WTC11 (cell line): ENCODE measurements at regions of chr19 and their contacts with region 1.

Region 1: DNA sequence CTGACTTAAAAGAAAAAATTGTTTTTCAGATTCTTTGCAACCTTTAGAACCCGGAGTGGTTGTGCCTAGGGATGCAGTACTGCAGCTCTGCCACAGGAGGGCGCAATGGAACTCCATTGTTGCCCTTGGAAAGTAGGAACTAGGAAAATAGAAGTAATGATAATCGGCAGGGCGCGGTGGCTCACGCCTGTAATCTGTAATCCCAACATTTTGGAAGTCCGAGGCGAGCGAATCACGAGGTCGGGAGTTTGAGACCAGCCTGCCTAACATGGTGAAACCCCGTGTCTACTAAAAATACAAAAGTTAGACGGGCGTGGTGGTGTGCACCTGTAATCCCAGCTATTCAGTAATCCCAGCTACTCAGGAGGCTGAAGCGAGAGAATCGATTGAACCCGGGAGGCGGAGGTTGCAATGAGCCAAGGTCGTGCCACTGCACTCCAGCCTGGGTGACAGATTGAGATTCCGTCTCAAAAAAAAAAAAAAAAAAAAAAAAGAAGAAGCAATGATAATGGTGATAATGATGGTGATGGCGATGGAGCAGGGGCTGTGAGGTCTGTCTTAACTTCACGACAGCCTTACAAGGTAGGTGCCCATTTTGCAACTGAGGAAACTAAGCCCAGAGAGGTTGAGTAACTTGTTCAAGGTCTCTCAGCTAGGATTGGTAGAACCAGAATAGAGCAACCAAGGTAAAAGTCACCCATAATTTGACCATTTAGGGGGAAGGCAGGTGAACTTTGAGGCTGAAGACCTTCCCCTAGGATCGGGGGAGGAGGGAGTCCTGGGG is 5.5 kb upstream of the ADAMTS10 start:
- DNase-seq: peak; percentile 77
- ATAC-seq: peak; percentile 12; the same call in 1 of the 2 replicates
- H3K4me3 Mint-ChIP-seq: no peak overlapping the region
- H3K27ac Mint-ChIP-seq: no peak overlapping the region
- H3K4me1 Mint-ChIP-seq: peaks cover 14% of the 10 kb centered on the region
- H3K27me3 Mint-ChIP-seq: no peaks in the 10 kb centered on the region
- CTCF ChIP-seq: peak; percentile 96

Region 2: GRCh38 chr19:8552810-8553209 is 63.2 kb before region 1 on chr19:
- CTCF ChIA-PET with region 1: no interaction called
- POLR2A ChIA-PET with region 1: no interaction called
- DNase-seq: peak; percentile 52
- ATAC-seq: peak; percentile 91
- H3K4me3 Mint-ChIP-seq: no peak overlapping the region
- H3K27ac Mint-ChIP-seq: no peak overlapping the region
- H3K4me1 Mint-ChIP-seq: peaks cover 4% of the 10 kb centered on the region; the same call in 1 of the 2 replicates
- H3K27me3 Mint-ChIP-seq: peaks cover 4% of the 10 kb centered on the region; the same call in 1 of the 2 replicates
- CTCF ChIP-seq: no peak

Region 3: GRCh38 chr19:8569066-8569771 is 46.8 kb before region 1 on chr19:
- CTCF ChIA-PET with region 1: no interaction called
- POLR2A ChIA-PET with region 1: no interaction called
- DNase-seq: no peak
- ATAC-seq: no peak
- H3K4me3 Mint-ChIP-seq: no peak overlapping the region
- H3K27ac Mint-ChIP-seq: no peak overlapping the region
- H3K4me1 Mint-ChIP-seq: no peaks in the 10 kb centered on the region
- H3K27me3 Mint-ChIP-seq: 0 out of 2 replicates have a peak, but pooled peaks cover 3% of the 10 kb centered on the region
- CTCF ChIP-seq: no peak

Region 4: GRCh38 chr19:8585894-8586750 is 29.9 kb before region 1 on chr19:
- CTCF ChIA-PET with region 1: interaction called, 18 read pairs
- POLR2A ChIA-PET with region 1: interaction called, 6 read pairs
- DNase-seq: peak; percentile 99
- ATAC-seq: peak; percentile 87
- H3K4me3 Mint-ChIP-seq: no peak overlapping the region
- H3K27ac Mint-ChIP-seq: no peak overlapping the region
- H3K4me1 Mint-ChIP-seq: peaks cover 4% of the 10 kb centered on the region; the same call in 1 of the 2 replicates
- H3K27me3 Mint-ChIP-seq: peaks cover 29% of the 10 kb centered on the region
- CTCF ChIP-seq: peak; percentile 93

Region 5: GRCh38 chr19:8592231-8593009 is 23.6 kb before region 1 on chr19:
- CTCF ChIA-PET with region 1: interaction called, 17 read pairs
- POLR2A ChIA-PET with region 1: interaction called, 6 read pairs
- DNase-seq: peak; percentile 100
- ATAC-seq: peak; percentile 98
- H3K4me3 Mint-ChIP-seq: peak overlapping the region; percentile 74
- H3K27ac Mint-ChIP-seq: no peak overlapping the region
- H3K4me1 Mint-ChIP-seq: peaks cover 9% of the 10 kb centered on the region
- H3K27me3 Mint-ChIP-seq: peaks cover 52% of the 10 kb centered on the region
- CTCF ChIP-seq: no peak

Region 6: DNA sequence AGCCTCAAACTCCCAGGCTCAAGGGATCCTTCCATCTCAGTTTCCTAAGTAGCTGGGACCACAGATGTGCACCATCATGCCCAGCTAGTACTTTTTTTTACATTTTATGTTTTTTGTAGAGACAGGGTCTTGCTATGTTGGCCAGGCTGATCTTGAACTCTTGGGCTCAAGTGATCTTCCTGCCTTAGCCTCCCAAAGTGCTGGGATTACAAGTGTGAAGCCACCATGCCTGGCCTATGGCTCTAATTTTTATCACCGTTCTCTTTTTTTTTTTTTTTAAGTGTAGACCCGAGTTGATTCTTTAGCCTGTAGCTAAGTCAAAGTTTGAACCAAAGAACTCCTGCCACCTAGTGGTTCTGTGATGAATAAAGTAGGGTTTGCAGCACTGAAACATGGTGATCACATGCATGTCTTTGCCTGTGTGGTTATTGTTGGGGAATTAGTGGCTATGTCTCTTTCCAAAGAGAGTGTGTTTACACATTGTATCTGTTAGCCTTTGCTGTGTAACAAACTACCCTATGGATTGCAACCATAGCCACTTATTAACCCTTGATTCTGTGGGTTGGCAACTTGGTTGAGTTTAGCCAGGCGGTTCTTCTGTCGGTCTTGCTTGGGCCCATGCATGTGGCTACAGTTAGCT is 26.0 kb after region 1 on chr19:
- CTCF ChIA-PET with region 1: interaction called, 31 read pairs
- POLR2A ChIA-PET with region 1: no interaction called
- DNase-seq: no peak
- ATAC-seq: 0 out of 2 replicates have a peak, but pooled peaks have one; percentile 30
- H3K4me3 Mint-ChIP-seq: no peak overlapping the region
- H3K27ac Mint-ChIP-seq: no peak overlapping the region
- H3K4me1 Mint-ChIP-seq: 0 out of 2 replicates have a peak, but pooled peaks cover 2% of the 10 kb centered on the region
- H3K27me3 Mint-ChIP-seq: peaks cover 27% of the 10 kb centered on the region
- CTCF ChIP-seq: peak; percentile 37; the same call in 1 of the 2 replicates

Region 7: GRCh38 chr19:8654591-8655339 is 38.8 kb after region 1 on chr19:
- CTCF ChIA-PET with region 1: interaction called, 10 read pairs
- POLR2A ChIA-PET with region 1: no interaction called
- DNase-seq: peak; percentile 78
- ATAC-seq: peak; percentile 87
- H3K4me3 Mint-ChIP-seq: peak overlapping the region; percentile 37; the same call in 1 of the 2 replicates
- H3K27ac Mint-ChIP-seq: no peak overlapping the region
- H3K4me1 Mint-ChIP-seq: no peaks in the 10 kb centered on the region
- H3K27me3 Mint-ChIP-seq: peaks cover 4% of the 10 kb centered on the region; the same call in 1 of the 2 replicates
- CTCF ChIP-seq: peak; percentile 100

Region 8: GRCh38 chr19:8840708-8841107 is 224.7 kb after region 1 on chr19:
- CTCF ChIA-PET with region 1: no interaction called
- POLR2A ChIA-PET with region 1: no interaction called
- DNase-seq: no peak
- ATAC-seq: no peak
- H3K4me3 Mint-ChIP-seq: no peak overlapping the region
- H3K27ac Mint-ChIP-seq: no peak overlapping the region
- H3K4me1 Mint-ChIP-seq: no peaks in the 10 kb centered on the region
- H3K27me3 Mint-ChIP-seq: peaks cover 15% of the 10 kb centered on the region
- CTCF ChIP-seq: no peak